ENCODE measurements at regions of chr5 and their contacts with region 1.

Region 1: DNA sequence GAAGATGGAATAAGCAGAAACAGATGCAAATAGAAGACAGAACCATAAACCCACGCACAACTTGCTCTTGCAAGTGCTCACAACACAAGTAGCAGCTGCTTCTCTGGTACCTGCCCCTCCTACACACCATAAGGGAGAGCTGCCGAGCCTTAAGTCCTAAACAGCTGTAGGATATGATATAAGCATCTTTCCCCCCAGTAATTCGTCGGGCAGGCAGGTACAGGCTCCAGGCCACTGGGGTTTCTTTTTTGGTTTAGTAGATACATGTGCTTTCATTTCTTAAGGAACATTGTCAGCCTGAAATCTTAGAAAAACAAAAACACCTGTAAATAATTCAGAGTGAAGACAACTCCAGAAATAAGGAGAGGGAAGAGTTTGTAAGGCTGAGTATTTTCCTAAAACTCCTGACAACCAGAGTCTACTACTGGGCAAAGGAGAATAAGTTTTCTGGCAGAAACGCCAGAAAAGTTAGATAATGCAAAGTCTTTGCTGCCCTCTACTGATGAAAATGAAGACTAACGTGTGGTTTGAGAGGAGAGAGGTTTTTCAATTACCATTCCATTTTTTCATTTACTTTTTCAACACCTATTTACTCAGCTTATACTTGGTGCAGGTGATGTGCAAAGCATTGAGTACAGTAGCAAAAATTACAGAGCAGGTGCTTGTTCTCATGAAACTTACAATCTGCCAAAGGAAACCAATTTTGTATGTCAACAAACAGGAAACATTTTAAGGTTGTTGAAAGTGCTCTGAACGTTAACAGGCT is 20.1 kb upstream of the TCERG1 start:
- DNase-seq: peak; percentile 38 to 58 (median 55)
- H3K4me3 ChIP-seq: no peak overlapping the region
- H3K27ac ChIP-seq: no peak overlapping the region
- H3K4me1 ChIP-seq: no peaks in the 10 kb centered on the region
- H3K27me3 ChIP-seq: peaks cover 0 to 5% (median 2%) of the 10 kb centered on the region in 5 experiments

Region 2: DNA sequence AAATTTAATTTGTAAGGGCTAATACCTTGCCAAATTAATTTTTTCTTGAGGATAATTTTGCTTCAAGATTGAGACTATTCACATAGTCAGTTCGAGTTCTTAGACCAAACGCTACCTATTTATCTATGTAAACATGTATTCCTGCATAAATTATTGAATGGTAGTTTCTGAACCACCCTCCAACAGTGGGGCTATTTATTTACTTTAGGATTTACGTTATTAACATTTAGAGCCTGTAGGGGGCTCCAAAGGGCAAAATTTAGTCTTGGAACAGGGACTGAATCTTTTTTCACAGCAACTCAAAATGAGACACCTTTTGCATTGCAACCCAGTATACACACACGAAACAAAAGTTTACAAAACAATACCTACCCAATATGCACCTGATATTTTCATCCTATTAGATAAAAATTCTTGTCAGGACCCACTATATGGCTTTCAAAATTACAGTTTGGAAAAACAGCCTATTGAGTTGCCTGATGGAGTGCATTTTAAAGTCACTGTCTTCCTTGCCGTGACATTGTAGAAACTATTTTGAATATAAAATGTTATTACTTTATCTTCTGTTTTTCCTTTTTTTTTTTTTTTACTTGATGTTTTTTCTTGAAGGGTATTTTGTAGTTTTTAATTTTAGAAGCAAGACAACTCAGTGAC is 135.5 kb before region 1 on chr5:
- CTCF ChIA-PET with region 1: interaction called, 42 read pairs
- POLR2A ChIA-PET with region 1: interaction called, 3 read pairs
- DNase-seq: peak; percentile 60 to 78 (median 69)
- H3K4me3 ChIP-seq: no peak overlapping the region
- H3K27ac ChIP-seq: no peak overlapping the region
- H3K4me1 ChIP-seq: no peaks in the 10 kb centered on the region
- H3K27me3 ChIP-seq: no peaks in the 10 kb centered on the region

Region 3: GRCh38 chr5:146440870-146441495 is 13.9 kb after region 1 on chr5:
- CTCF ChIA-PET with region 1: interaction called, 17 read pairs
- POLR2A ChIA-PET with region 1: no interaction called
- DNase-seq: no peak
- H3K4me3 ChIP-seq: no peak overlapping the region
- H3K27ac ChIP-seq: no peak overlapping the region
- H3K4me1 ChIP-seq: no peaks in the 10 kb centered on the region
- H3K27me3 ChIP-seq: peaks cover 0 to 14% (median 3%) of the 10 kb centered on the region in 5 experiments

Region 4: GRCh38 chr5:146490089-146490843 is 63.2 kb after region 1 on chr5:
- CTCF ChIA-PET with region 1: no interaction called
- POLR2A ChIA-PET with region 1: no interaction called
- DNase-seq: no peak
- H3K4me3 ChIP-seq: no peak overlapping the region
- H3K27ac ChIP-seq: no peak overlapping the region
- H3K4me1 ChIP-seq: no peaks in the 10 kb centered on the region
- H3K27me3 ChIP-seq: no peaks in the 10 kb centered on the region

Measured in common myeloid progenitor, CD34-positive (primary cell).